Pancreas (tissue), 10 donors: ENCODE measurements at regions of chr7 and their contacts with region 1.

Region 1: DNA sequence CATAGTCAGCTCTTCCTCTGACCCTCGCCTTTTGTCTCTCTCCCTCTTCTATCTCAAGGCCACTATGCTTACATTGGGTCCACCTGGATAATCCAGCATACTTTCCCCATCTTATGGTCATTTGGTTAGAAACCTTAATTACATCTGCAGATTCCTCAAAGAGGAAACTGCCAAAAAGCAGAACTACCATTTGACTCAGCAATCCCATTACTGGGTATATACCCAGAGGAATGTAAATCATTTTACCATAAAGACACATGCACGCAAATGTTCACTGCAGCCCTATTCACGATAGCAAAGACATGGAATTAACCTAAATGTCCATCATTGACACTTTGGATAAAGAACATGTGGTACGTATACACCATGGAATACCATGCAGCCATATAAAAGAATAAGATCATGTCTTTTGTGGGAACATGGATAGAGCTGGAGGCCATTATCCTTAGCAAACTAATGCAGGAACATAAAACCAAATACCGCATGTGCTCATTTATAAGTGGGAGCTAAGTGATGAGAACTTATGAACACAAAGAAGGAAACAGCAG is 114.8 kb upstream of the NPY start:
- DNase-seq: no peak
- ATAC-seq: no peak
- H3K4me3 ChIP-seq: no peak overlapping the region
- H3K27ac ChIP-seq: no peak overlapping the region
- H3K4me1 ChIP-seq: peaks cover 0 to 7% (median 0%) of the 10 kb centered on the region in 3 donors
- H3K27me3 ChIP-seq: no peaks in the 10 kb centered on the region
- CTCF ChIP-seq: no peak

Region 2: GRCh38 chr7:23928418-23928775 is 240.8 kb before region 1 on chr7:
- intact Hi-C with region 1: no loop called
- DNase-seq: no peak
- ATAC-seq: no peak
- H3K4me3 ChIP-seq: no peak overlapping the region
- H3K27ac ChIP-seq: no peak overlapping the region
- H3K4me1 ChIP-seq: no peaks in the 10 kb centered on the region
- H3K27me3 ChIP-seq: no peaks in the 10 kb centered on the region
- CTCF ChIP-seq: no peak

Region 3: DNA sequence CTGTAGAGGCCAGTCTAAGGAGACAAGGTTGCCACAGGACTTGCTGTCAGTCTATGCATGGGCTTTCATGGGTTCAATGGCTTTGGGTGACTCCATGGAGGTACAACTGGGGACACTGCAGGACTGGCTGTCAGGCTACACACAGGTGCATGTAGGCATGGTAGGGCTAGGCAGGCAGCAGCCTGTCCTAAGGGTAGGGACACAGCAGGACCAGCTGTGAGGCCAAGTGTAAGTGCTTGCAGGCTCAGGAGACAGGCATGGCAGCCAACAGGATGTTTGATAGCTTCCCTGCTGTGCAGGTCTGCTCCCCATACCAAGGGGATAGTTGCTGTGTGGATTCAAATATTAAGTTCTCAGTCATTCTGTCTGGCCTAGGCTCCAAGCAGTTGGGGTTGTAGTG is 66.2 kb before region 1 on chr7:
- intact Hi-C with region 1: loop called in 1 of 3 experiments (anchors 10 kb)
- DNase-seq: no peak
- ATAC-seq: no peak
- H3K4me3 ChIP-seq: no peak overlapping the region
- H3K27ac ChIP-seq: no peak overlapping the region
- H3K4me1 ChIP-seq: no peaks in the 10 kb centered on the region
- H3K27me3 ChIP-seq: no peaks in the 10 kb centered on the region
- CTCF ChIP-seq: no peak